AG04450 (cell line): ENCODE measurements at regions of chr2 and their contacts with region 1.

Region 1: GRCh38 chr2:172931918-172932520 is 143.6 kb upstream of the MAP3K20 start:
- DNase-seq: peak; percentile 49
- H3K4me3 ChIP-seq: no peak overlapping the region
- H3K27ac ChIP-seq: no peak overlapping the region
- H3K27me3 ChIP-seq: no peaks in the 10 kb centered on the region
- CTCF ChIP-seq: peak; percentile 78

Region 2: GRCh38 chr2:172564376-172564775 is 367.6 kb before region 1 on chr2:
- CTCF ChIA-PET with region 1: no interaction called
- POLR2A ChIA-PET with region 1: no interaction called
- DNase-seq: no peak
- H3K4me3 ChIP-seq: no peak overlapping the region
- H3K27ac ChIP-seq: no peak overlapping the region
- H3K27me3 ChIP-seq: no peaks in the 10 kb centered on the region
- CTCF ChIP-seq: no peak

Region 3: GRCh38 chr2:172836386-172836821 is 95.6 kb before region 1 on chr2:
- CTCF ChIA-PET with region 1: interaction called, 11 read pairs
- POLR2A ChIA-PET with region 1: no interaction called
- DNase-seq: no peak
- H3K4me3 ChIP-seq: no peak overlapping the region
- H3K27ac ChIP-seq: no peak overlapping the region
- H3K27me3 ChIP-seq: no peaks in the 10 kb centered on the region
- CTCF ChIP-seq: no peak

Region 4: DNA sequence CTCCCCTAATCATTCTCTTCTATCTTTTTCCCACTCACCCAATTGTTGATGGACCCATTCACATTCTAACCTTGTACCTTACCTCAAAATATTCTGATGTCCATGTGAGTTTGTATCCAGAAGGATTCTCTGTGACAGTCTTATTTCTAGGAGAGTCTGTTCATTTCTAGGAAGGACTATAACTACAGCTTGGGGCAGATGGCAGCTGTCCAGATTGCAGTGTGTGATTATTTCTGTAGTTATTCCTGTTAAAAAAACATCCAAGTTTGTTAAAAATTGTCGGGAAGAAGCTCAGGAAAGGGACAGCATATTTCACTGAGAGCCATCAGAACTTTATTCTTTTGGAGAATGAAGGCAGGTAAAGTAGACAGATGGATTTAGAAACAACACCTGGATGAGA is 53.8 kb before region 1 on chr2:
- CTCF ChIA-PET with region 1: interaction called, 29 read pairs
- POLR2A ChIA-PET with region 1: no interaction called
- DNase-seq: no peak
- H3K4me3 ChIP-seq: no peak overlapping the region
- H3K27ac ChIP-seq: no peak overlapping the region
- H3K27me3 ChIP-seq: no peaks in the 10 kb centered on the region
- CTCF ChIP-seq: no peak

Region 5: GRCh38 chr2:172921532-172922236 is 10.3 kb before region 1 on chr2:
- CTCF ChIA-PET with region 1: interaction called, 51 read pairs
- POLR2A ChIA-PET with region 1: no interaction called
- DNase-seq: no peak
- H3K4me3 ChIP-seq: no peak overlapping the region
- H3K27ac ChIP-seq: no peak overlapping the region
- H3K27me3 ChIP-seq: no peaks in the 10 kb centered on the region
- CTCF ChIP-seq: no peak

Region 6: DNA sequence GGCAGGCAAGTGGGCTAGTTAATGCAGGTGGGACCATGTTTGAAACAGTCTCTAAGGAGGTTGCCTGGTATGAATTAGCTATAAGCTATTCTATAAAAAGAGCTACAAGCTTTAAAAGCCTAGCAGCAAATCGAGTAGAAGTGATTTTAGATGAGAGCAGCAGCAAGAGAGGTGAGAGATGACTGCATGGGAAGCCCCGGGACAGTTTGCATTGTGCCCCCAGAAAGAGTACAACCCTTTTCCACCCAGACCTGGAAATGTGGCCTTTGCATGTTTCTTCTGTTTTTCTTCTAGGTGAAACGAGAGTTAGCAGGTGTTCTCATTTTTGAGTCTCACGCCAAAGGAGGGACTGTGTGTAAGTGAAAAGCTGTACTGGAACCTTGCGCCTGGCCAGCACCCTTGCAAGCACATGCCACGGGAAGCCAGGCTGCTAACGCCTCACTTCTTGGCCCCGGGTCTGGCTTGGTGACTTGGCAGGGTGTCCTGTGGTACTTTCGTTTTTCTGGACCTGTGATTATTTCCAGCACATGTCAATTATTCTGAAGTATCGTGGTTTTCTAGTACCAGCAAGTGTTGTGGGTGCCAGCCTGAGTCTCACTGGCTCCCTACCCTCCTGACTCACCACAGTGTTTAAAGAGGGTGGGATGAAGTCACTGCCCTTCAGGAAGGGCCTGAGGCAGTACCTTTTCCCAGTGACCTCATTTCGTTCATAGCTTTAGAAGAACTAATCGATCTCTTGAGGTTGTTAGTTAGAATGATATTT is 53.3 kb after region 1 on chr2:
- CTCF ChIA-PET with region 1: interaction called, 10 read pairs
- POLR2A ChIA-PET with region 1: no interaction called
- DNase-seq: no peak
- H3K4me3 ChIP-seq: no peak overlapping the region
- H3K27ac ChIP-seq: no peak overlapping the region
- H3K27me3 ChIP-seq: peaks cover 5% of the 10 kb centered on the region
- CTCF ChIP-seq: no peak

Region 7: GRCh38 chr2:173286153-173286809 is 354.3 kb after region 1 on chr2:
- CTCF ChIA-PET with region 1: no interaction called
- POLR2A ChIA-PET with region 1: no interaction called
- DNase-seq: no peak
- H3K4me3 ChIP-seq: no peak overlapping the region
- H3K27ac ChIP-seq: no peak overlapping the region
- H3K27me3 ChIP-seq: no peaks in the 10 kb centered on the region
- CTCF ChIP-seq: no peak